ENCODE measurements at regions of chr2 and their contacts with region 1.

Region 1: DNA sequence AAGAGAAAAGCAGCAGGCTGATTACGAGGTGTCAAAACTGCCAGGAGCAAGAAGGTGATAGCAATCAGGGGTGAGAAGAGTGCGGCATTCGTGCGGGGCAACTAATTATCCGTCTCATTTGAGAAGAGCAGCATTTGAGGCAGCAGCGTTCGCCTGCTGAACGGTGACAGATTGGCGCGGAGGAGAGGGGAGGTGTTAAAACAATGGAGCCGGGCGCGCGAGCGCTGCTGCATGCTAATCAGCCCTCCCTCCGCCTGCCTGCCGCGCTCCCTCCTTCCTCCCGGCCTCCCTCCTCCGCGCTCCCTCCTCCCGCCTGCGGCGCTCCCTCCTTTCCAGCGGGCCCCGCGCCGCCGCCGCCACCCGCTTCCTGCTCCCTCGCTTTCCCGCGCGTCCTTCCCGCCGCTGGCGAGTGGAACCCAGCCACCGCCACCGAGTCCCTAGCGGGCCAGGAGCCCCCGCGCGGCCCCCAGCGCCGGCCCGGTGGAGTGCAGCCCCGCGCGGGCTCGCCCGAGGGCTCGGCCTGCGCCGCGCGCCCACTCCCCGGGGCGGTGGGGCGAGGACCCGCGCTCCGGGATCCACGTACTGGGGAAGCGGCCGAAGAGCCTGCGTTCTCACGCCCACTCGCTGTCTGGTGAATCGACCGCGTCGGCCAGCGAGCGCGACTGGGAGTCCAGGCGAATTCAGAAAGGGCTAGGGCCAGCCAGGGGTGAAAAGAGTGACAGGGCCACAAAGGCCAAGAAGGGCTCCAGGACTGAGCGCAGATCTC is 69.5 kb upstream of the PSMD14 start:
- DNase-seq: peak; percentile 83
- ATAC-seq: peak; percentile 85

Region 2: GRCh38 chr2:161556440-161556839 is 317.7 kb after region 1 on chr2:
- intact Hi-C with region 1: loop called (anchors 10 kb)
- DNase-seq: no peak
- ATAC-seq: no peak

Region 3: DNA sequence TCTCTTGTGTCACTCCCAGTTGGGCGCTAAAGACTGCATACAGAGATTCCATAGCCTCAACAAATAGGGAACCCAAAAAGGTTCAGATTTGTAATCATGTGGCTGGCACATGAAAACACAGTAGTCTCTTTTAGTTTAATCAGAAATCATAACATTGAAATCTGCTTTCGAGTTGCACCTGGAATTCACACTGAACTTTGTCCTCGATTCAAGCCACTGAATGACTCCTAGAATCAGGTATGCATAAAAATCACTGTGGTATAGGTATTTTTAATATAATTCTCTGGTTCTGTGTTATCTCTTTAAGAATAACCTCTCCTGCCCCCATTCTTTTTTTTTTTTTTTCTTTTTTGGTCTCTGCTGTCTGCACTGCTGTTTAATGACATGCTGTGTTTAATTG is 1449.7 kb after region 1 on chr2:
- intact Hi-C with region 1: no loop called
- DNase-seq: no peak
- ATAC-seq: no peak